Common myeloid progenitor, CD34-positive (primary cell): ENCODE measurements at regions of chr5 and their contacts with region 1.

Region 1: DNA sequence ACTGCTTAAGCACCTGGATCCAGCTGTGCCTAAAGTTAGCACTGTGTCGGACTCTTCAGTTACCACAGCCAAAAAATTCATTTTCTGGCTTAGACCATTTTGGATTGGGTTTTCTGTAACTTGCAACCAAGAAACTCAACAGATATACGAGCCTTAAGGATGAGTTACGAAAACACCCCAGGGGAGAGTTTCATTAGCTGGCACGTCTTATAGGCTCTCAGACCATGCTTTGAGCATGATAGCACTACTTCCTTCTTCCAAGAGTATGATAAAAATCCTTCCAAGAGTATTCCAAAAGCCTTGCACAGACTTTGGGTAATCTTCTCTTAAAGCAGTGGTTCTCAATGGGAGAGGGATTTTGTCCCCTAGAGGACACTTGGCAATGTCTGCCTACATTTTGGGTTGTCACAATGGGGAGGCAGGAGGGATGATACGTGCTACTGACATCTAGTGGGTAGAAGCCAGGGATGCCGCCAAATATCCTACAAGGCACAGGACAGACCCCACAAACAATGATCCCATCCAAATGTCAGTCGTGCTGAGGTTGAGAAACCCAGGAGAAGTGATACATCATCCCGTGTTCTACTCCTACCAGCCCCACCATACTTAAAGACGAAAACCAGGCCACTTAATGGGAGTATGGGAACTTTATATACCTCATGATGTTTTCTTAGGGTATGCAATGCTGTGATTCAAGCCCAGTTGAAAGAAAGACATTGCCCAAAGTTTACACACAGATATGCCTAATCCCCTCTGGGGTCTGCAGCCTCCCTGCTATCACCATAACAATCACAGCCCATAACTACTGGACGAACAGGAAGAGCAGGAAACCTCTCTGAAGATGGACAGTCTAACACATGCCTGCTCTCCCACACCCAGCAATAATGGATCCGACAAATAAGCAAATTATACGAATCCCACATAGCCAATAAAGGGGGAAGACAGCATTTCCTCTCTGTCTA is 65.0 kb downstream of the SMIM23 start:
- DNase-seq: peak; percentile 63 to 73 (median 71)
- H3K4me3 ChIP-seq: no peak overlapping the region
- H3K27ac ChIP-seq: no peak overlapping the region
- H3K4me1 ChIP-seq: peaks cover 3 to 61% (median 34%) of the 10 kb centered on the region in 4 experiments
- H3K27me3 ChIP-seq: no peaks in the 10 kb centered on the region

Region 2: GRCh38 chr5:171418316-171418981 is 432.2 kb before region 1 on chr5:
- CTCF ChIA-PET with region 1: interaction called, 12 read pairs
- POLR2A ChIA-PET with region 1: no interaction called
- DNase-seq: peak; percentile 46 to 62 (median 61)
- H3K4me3 ChIP-seq: peak overlapping the region; percentile 19 to 83 (median 57)
- H3K27ac ChIP-seq: no peak overlapping the region
- H3K4me1 ChIP-seq: peaks cover 0 to 28% (median 25%) of the 10 kb centered on the region in 4 experiments
- H3K27me3 ChIP-seq: peaks cover 0 to 25% (median 10%) of the 10 kb centered on the region in 5 experiments

Region 3: GRCh38 chr5:171595801-171596231 is 254.8 kb before region 1 on chr5:
- CTCF ChIA-PET with region 1: no interaction called
- POLR2A ChIA-PET with region 1: no interaction called
- DNase-seq: peak in 2 of 3 donors; percentile 39 to 50
- H3K4me3 ChIP-seq: no peak overlapping the region
- H3K27ac ChIP-seq: no peak overlapping the region
- H3K4me1 ChIP-seq: peaks cover 0 to 19% (median 15%) of the 10 kb centered on the region in 4 experiments
- H3K27me3 ChIP-seq: no peaks in the 10 kb centered on the region